Endothelial cell of umbilical vein (primary cell): ENCODE measurements at regions of chr1 and their contacts with region 1.

Region 1: GRCh38 chr1:145823565-145824498 is at the starts of genes POLR3C and RNF115:
- DNase-seq: peak; percentile 90
- H3K4me3 ChIP-seq: peak within 1 kb of the TSS; percentile 47 to 95 (median 86)
- H3K27ac ChIP-seq: peak within 1 kb of the TSS; percentile 69
- H3K4me1 ChIP-seq: peaks cover 13% of the 10 kb centered on the region
- H3K27me3 ChIP-seq: no peaks in the 10 kb centered on the region
- CTCF ChIP-seq: no peak
- POLR2A ChIP-seq: peak; percentile 14
- total RNA-seq, gene POLR3C: 30.4 and 31.0 TPM in 2 replicates
- total RNA-seq, gene RNF115: 17.3 and 20.5 TPM in 2 replicates

Region 2: GRCh38 chr1:145706086-145706680 is 117.6 kb before region 1 on chr1:
- CTCF ChIA-PET with region 1: no interaction called
- POLR2A ChIA-PET with region 1: no interaction called
- dilution Hi-C with region 1: no loop called
- intact Hi-C with region 1: no loop called
- DNase-seq: no peak
- H3K4me3 ChIP-seq: no peak overlapping the region
- H3K27ac ChIP-seq: no peak overlapping the region
- H3K4me1 ChIP-seq: no peaks in the 10 kb centered on the region
- H3K27me3 ChIP-seq: peaks cover 8 to 11% of the 10 kb centered on the region in 2 experiments
- CTCF ChIP-seq: no peak
- POLR2A ChIP-seq: no peak

Region 3: GRCh38 chr1:145720877-145721671 is 102.8 kb before region 1 on chr1:
- CTCF ChIA-PET with region 1: interaction called, 11 read pairs
- POLR2A ChIA-PET with region 1: no interaction called
- dilution Hi-C with region 1: no loop called
- intact Hi-C with region 1: loop called (anchors 2 kb)
- DNase-seq: peak; percentile 41
- H3K4me3 ChIP-seq: peak overlapping the region in 2 of 3 experiments; percentile 29 to 30
- H3K27ac ChIP-seq: no peak overlapping the region
- H3K4me1 ChIP-seq: peaks cover 9% of the 10 kb centered on the region
- H3K27me3 ChIP-seq: peaks cover 0 to 4% of the 10 kb centered on the region in 2 experiments
- CTCF ChIP-seq: peak; percentile 91 to 94
- POLR2A ChIP-seq: no peak

Region 4: DNA sequence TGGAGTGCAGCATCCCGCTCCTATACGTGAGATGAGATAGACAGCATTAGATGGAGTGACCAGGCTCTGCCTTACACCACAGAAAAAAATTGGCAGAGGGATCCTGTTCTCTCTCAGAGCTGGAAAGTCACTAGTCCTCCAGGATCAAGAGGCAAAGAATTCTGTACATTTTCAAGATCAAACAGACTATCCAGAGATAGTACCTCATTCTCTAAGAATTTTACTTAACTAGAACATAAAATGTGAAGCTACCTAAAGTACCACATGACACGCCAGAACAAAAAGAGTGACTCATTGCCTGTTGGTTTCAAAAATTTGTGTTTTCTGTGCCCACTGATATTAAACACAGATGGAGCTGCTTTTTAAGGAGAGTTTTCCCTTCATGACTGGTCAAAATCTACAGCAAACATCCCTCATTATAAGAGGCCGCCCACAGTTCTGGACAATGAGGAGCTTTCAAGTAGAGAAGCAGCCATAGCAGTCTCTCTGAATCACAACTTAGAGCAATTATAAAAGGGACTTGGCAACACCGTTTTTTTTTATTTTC is 72.3 kb before region 1 on chr1:
- CTCF ChIA-PET with region 1: interaction called, 18 read pairs
- POLR2A ChIA-PET with region 1: no interaction called
- dilution Hi-C with region 1: no loop called
- intact Hi-C with region 1: loop called (anchors 10 kb)
- DNase-seq: peak; percentile 72
- H3K4me3 ChIP-seq: no peak overlapping the region
- H3K27ac ChIP-seq: peak overlapping the region; percentile 33
- H3K4me1 ChIP-seq: peaks cover 13% of the 10 kb centered on the region
- H3K27me3 ChIP-seq: no peaks in the 10 kb centered on the region
- CTCF ChIP-seq: no peak
- POLR2A ChIP-seq: no peak

Region 5: DNA sequence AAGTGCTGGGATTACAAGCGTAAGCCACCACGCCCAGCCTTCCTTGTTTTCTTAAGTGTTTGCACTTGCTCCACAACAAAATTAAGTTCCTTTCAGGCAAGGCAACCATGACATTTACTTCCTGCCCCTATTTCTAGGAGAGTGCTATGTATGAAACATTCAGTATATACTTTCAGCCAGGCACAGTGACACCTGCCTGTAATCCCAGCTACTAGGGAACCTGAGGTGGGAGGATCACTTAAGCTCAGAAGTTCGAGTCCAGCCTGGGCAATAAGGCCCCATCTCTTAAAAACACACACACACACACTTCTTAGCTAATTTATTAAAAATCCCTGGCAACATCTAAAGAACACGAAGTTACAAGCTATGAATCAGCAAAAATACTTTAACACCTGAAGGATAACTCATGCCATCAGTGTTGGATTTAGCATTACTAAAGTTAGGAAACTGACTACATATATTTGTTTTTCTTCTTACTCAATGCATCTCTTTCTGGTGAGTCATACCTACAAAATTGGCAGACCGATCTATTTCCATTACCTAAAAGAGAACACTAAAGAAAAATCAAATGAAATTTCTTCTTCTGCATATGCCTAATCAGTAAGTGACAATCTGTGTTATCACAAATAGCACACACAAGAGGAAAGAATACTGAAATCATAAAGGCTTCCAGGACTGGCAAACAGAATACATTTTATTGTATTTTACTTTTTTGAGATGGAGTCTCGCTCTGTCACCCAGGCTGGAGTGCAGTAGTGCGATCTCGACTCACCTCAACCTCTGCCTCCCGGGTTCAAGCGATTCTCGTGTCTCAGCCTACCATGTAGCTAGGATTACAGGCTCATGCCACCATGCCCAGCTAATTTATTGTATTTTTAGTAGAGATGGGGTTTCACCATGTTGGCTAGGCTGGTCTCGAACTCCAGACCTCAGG is 41.4 kb before region 1 on chr1:
- CTCF ChIA-PET with region 1: interaction called, 6 read pairs
- POLR2A ChIA-PET with region 1: interaction called, 4 read pairs
- dilution Hi-C with region 1: no loop called
- intact Hi-C with region 1: loop called (anchors 1 kb)
- DNase-seq: peak; percentile 96
- H3K4me3 ChIP-seq: no peak overlapping the region
- H3K27ac ChIP-seq: peak overlapping the region; percentile 91
- H3K4me1 ChIP-seq: peaks cover 52% of the 10 kb centered on the region
- H3K27me3 ChIP-seq: no peaks in the 10 kb centered on the region
- CTCF ChIP-seq: no peak
- POLR2A ChIP-seq: no peak

Region 6: GRCh38 chr1:145804235-145805045 is 19.4 kb before region 1 on chr1:
- CTCF ChIA-PET with region 1: no interaction called
- POLR2A ChIA-PET with region 1: no interaction called
- dilution Hi-C with region 1: no loop called
- intact Hi-C with region 1: no loop called
- DNase-seq: no peak
- H3K4me3 ChIP-seq: no peak overlapping the region
- H3K27ac ChIP-seq: no peak overlapping the region
- H3K4me1 ChIP-seq: no peaks in the 10 kb centered on the region
- H3K27me3 ChIP-seq: no peaks in the 10 kb centered on the region
- CTCF ChIP-seq: no peak
- POLR2A ChIP-seq: no peak